ENCODE measurements at regions of chr3 and their contacts with region 1.

Region 1: DNA sequence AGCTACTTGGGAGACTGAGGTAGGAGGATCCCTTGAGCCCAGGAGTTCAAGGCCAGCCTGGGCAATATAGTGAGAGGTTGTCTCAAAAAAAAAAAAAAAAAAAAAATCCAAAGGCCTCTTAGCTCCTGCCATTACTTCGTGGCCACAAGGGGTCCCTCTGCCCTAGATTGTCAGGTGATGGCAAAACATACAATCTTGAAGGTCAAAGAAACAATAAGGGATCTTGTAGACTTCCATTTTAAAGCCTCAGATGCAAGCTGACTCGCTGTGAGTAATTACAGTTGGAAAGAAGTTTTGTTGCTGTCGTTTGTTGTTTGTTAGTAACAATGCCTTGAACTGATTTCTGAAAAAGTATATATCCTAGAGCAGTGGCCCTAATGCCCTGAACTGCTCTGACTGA is 55.9 kb upstream of the PLCL2 start:
- DNase-seq: peak; percentile 71
- ATAC-seq: peak; percentile 60
- H3K4me3 ChIP-seq: no peak overlapping the region
- H3K4me3 Mint-ChIP-seq: no peak overlapping the region
- H3K27ac ChIP-seq: no peak overlapping the region
- H3K27ac Mint-ChIP-seq: no peak overlapping the region
- H3K4me1 ChIP-seq: peaks cover 11 to 12% of the 10 kb centered on the region in 2 donors
- H3K4me1 Mint-ChIP-seq: peaks cover 15% of the 10 kb centered on the region
- H3K27me3 ChIP-seq: no peaks in the 10 kb centered on the region
- H3K27me3 Mint-ChIP-seq: no peaks in the 10 kb centered on the region
- CTCF ChIP-seq: peak; percentile 62

Region 2: GRCh38 chr3:16842272-16843270 is 13.8 kb after region 1 on chr3:
- CTCF ChIA-PET with region 1: interaction called, 27 read pairs
- POLR2A ChIA-PET with region 1: interaction called, 8 read pairs
- intact Hi-C with region 1: loop called (anchors 1 kb)
- DNase-seq: peak; percentile 90
- ATAC-seq: peak; percentile 89
- H3K4me3 ChIP-seq: peak overlapping the region in 4 of 5 experiments; percentile 12 to 50 (median 36)
- H3K4me3 Mint-ChIP-seq: peak overlapping the region; percentile 65
- H3K27ac ChIP-seq: peak overlapping the region; percentile 93 to 97
- H3K27ac Mint-ChIP-seq: peak overlapping the region; percentile 95
- H3K4me1 ChIP-seq: peaks cover 51 to 52% of the 10 kb centered on the region in 2 donors
- H3K4me1 Mint-ChIP-seq: peaks cover 66% of the 10 kb centered on the region
- H3K27me3 ChIP-seq: no peaks in the 10 kb centered on the region
- H3K27me3 Mint-ChIP-seq: no peaks in the 10 kb centered on the region
- CTCF ChIP-seq: no peak

Region 3: GRCh38 chr3:16897254-16897926 is 68.6 kb after region 1 on chr3:
- CTCF ChIA-PET with region 1: no interaction called
- POLR2A ChIA-PET with region 1: no interaction called
- intact Hi-C with region 1: no loop called
- DNase-seq: peak; percentile 77
- ATAC-seq: peak; percentile 88
- H3K4me3 ChIP-seq: peak overlapping the region in 4 of 5 experiments; percentile 1 to 48 (median 12)
- H3K4me3 Mint-ChIP-seq: peak overlapping the region; percentile 75
- H3K27ac ChIP-seq: peak overlapping the region; percentile 45 to 80
- H3K27ac Mint-ChIP-seq: peak overlapping the region; percentile 87
- H3K4me1 ChIP-seq: peaks cover 76 to 92% of the 10 kb centered on the region in 2 donors
- H3K4me1 Mint-ChIP-seq: peaks cover 88% of the 10 kb centered on the region
- H3K27me3 ChIP-seq: no peaks in the 10 kb centered on the region
- H3K27me3 Mint-ChIP-seq: no peaks in the 10 kb centered on the region
- CTCF ChIP-seq: no peak

Region 4: DNA sequence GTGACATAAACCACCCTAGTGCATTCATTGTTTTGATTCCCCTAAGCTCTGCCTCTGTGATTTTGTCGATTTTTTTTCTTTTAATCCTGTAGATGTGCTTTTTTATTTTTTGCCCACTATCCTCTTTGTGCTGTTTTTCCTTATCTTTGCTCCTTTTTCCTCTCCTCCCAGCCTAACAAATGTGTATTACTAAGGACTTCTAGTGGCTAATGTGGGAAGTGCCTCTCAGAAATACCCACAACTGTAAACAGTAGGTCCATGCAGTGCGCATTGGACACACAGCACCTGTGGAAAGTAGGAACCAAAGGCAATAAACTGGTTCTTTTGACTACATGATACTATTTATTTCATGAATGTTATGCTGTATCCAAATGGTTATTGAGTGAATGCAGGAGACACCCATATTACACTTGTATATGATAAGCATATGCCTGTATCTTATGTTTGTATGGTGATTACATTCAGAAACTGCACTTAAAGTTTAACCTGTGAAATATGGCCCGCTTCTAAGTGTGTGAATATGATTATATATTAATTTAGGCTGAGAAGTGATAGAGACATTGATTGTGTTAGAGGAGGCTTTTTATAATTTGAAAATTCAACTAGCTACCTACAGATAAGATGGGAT is 203.7 kb after region 1 on chr3:
- CTCF ChIA-PET with region 1: interaction called, 11 read pairs
- POLR2A ChIA-PET with region 1: no interaction called
- intact Hi-C with region 1: loop called (anchors 5 kb)
- DNase-seq: peak; percentile 19
- ATAC-seq: peak; percentile 28
- H3K4me3 ChIP-seq: no peak overlapping the region
- H3K4me3 Mint-ChIP-seq: no peak overlapping the region
- H3K27ac ChIP-seq: no peak overlapping the region
- H3K27ac Mint-ChIP-seq: no peak overlapping the region
- H3K4me1 ChIP-seq: peaks cover 17 to 25% of the 10 kb centered on the region in 2 donors
- H3K4me1 Mint-ChIP-seq: peaks cover 39% of the 10 kb centered on the region
- H3K27me3 ChIP-seq: no peaks in the 10 kb centered on the region
- H3K27me3 Mint-ChIP-seq: no peaks in the 10 kb centered on the region
- CTCF ChIP-seq: peak; percentile 24

Region 5: DNA sequence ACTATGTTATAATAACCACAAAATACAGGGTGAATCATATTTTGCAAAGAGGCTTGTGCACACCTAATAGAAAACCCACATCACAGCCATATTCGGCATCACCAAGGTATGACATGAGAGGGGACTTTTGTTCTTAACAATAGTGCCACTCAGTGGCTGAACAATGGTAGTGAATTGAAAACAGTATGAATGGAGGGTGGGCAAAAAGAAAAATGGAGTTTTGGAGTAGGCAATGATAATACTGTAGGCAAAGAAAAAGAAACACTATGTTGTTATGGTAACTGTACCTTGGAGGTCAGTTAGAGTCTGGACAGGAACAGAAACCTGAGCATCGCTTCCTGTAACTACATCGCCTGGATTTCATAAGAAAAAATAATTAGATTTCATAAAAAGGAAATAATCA is 404.6 kb after region 1 on chr3:
- CTCF ChIA-PET with region 1: interaction called, 43 read pairs
- POLR2A ChIA-PET with region 1: no interaction called
- intact Hi-C with region 1: loop called (anchors 1 kb)
- DNase-seq: peak; percentile 71
- ATAC-seq: peak; percentile 97
- H3K4me3 ChIP-seq: no peak overlapping the region
- H3K4me3 Mint-ChIP-seq: no peak overlapping the region
- H3K27ac ChIP-seq: no peak overlapping the region
- H3K27ac Mint-ChIP-seq: no peak overlapping the region
- H3K4me1 ChIP-seq: peaks cover 4 to 13% of the 10 kb centered on the region in 2 donors
- H3K4me1 Mint-ChIP-seq: peaks cover 20% of the 10 kb centered on the region
- H3K27me3 ChIP-seq: no peaks in the 10 kb centered on the region
- H3K27me3 Mint-ChIP-seq: no peaks in the 10 kb centered on the region
- CTCF ChIP-seq: peak; percentile 86